Head of caudate nucleus (tissue), 42 donors: ENCODE measurements at regions of chr1 and their contacts with region 1.

Region 1: GRCh38 chr1:162036163-162036562 is 12.5 kb upstream of the OLFML2B start:
- DNase-seq: no peak

Region 2: GRCh38 chr1:161792740-161793139 is 243.4 kb before region 1 on chr1:
- intact Hi-C with region 1: loop called (anchors 2 kb)
- DNase-seq: peak in 8 of 42 donors; percentile 6 to 67 (median 20)

Region 3: GRCh38 chr1:162136760-162137159 is 100.6 kb after region 1 on chr1:
- intact Hi-C with region 1: no loop called
- DNase-seq: no peak